GM12878 (cell line): ENCODE measurements at regions of chr15 and their contacts with region 1.

Region 1: DNA sequence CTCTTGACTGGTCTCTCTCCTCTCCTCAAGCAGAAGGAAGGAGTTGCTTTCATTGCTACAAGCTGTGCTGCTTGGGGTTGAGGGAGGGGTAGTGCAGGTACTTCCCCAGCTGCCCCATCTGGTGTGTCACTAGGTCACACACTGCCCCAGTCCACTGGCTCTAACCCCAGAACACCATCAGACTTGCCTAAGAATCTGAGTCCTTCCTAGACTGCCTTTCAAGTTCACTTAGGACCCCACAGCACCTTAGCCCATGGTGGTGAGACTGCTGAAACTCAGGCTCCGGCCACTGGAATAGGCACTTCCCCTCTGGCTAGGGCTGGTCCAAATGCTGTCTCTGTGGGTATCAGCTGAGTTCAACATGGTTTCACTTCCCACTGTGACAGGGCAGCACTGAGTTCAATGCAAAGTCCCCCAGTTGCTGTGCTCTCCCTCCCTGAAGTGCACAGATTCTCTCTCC is 279.7 kb upstream of the GOLGA6L4 start:
- DNase-seq: peak; percentile 87
- ATAC-seq: peak; percentile 99
- H3K4me3 ChIP-seq: no peak overlapping the region
- H3K27ac ChIP-seq: peak overlapping the region; percentile 80
- H3K4me1 ChIP-seq: peaks cover 22% of the 10 kb centered on the region
- H3K27me3 ChIP-seq: no peaks in the 10 kb centered on the region
- CTCF ChIP-seq: no peak
- EP300 ChIP-seq: peak in 1 of 2 experiments; percentile 53; a peak in 1 of 4 replicates
- POLR2A ChIP-seq: peak; percentile 57
- RAD21 ChIP-seq: no peak; the same call in 1 of the 2 replicates

Region 2: DNA sequence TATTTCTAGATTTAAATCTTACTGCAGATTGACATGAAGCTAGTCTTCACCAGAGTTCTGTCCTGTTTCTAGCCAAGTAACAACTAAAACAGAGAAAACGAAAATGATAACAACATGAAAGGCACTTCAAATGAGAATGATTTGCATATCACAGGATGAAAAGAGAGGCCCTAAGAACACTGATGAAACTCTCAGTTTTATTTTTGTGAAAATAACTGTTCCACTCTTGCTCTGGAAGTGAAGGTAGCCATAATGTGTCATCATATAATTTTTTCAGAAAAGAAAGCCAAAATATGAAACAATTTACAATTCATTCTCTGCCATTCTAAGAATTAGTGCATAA is 27.5 kb before region 1 on chr15:
- CTCF ChIA-PET with region 1: interaction called, 3 read pairs
- POLR2A ChIA-PET with region 1: interaction called, 3 read pairs
- RAD21 ChIA-PET with region 1: interaction called, 6 read pairs
- SMC1A ChIA-PET with region 1: interaction called, 10 read pairs
- in situ Hi-C with region 1: no loop called
- intact Hi-C with region 1: no loop called
- DNase-seq: peak; percentile 84
- ATAC-seq: peak; percentile 90
- H3K4me3 ChIP-seq: peak overlapping the region; percentile 31; the same call in 1 of the 2 replicates
- H3K27ac ChIP-seq: peak overlapping the region; percentile 99
- H3K4me1 ChIP-seq: peaks cover 36% of the 10 kb centered on the region
- H3K27me3 ChIP-seq: no peaks in the 10 kb centered on the region
- CTCF ChIP-seq: no peak
- EP300 ChIP-seq: peak; percentile 14 to 63; a peak in 2 of 4 replicates
- POLR2A ChIP-seq: no peak
- RAD21 ChIP-seq: no peak

Region 3: DNA sequence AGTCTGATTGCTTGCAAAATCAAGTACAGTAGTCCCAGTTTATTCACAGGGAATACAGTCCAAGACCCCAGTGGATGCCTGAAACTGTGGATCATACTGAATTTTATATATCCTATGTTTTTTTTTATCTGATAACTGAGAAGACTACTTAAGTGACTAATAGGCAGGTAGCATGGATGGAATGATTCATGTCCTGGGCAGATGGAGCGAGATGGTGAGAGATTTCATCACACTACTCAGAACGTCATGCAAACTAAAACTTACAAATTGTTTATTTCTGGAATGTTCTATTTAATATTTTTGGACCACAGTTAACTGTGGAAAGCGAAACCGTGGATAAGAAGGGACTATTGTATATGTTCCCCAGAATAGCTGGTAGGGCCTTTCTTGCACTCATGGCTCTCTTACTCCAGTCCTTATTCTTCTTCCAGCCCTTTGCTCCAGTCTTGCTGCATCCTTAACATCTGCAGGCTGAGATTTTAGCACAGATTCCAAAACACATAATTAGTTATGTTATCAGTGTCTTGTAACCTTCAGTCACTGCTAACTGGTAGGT is 11.9 kb before region 1 on chr15:
- CTCF ChIA-PET with region 1: interaction called, 4 read pairs
- POLR2A ChIA-PET with region 1: no interaction called
- RAD21 ChIA-PET with region 1: interaction called, 3 read pairs
- SMC1A ChIA-PET with region 1: interaction called, 12 read pairs
- in situ Hi-C with region 1: no loop called
- intact Hi-C with region 1: no loop called
- DNase-seq: no peak
- ATAC-seq: no peak
- H3K4me3 ChIP-seq: no peak overlapping the region
- H3K27ac ChIP-seq: no peak overlapping the region
- H3K4me1 ChIP-seq: peaks cover 5% of the 10 kb centered on the region
- H3K27me3 ChIP-seq: no peaks in the 10 kb centered on the region
- CTCF ChIP-seq: no peak
- EP300 ChIP-seq: no peak
- POLR2A ChIP-seq: no peak
- RAD21 ChIP-seq: no peak

Region 4: DNA sequence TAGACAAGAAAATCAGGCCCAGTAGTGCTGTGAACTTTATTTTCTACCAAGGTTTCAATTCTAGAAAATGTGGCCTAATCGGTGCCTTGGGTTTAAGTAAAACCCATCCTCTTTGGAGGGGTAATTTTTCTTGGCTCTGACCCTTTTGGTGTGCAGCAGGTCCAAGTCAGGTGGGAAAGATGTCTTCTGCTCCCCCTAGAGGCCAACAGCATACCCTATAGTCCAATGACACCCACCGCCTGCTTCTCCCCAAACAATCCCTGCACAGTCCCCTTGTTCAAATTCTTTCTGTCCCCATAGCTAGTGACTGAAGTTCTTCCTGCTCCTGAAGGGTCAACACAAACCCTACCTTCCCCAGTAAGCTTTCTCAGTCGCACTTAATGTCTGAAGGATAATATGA is 18.0 kb after region 1 on chr15:
- CTCF ChIA-PET with region 1: interaction called, 15 read pairs
- POLR2A ChIA-PET with region 1: no interaction called
- RAD21 ChIA-PET with region 1: interaction called, 5 read pairs
- SMC1A ChIA-PET with region 1: interaction called, 5 read pairs
- in situ Hi-C with region 1: no loop called
- intact Hi-C with region 1: no loop called
- DNase-seq: no peak
- ATAC-seq: peak; percentile 93
- H3K4me3 ChIP-seq: no peak overlapping the region
- H3K27ac ChIP-seq: no peak overlapping the region
- H3K4me1 ChIP-seq: no peaks in the 10 kb centered on the region
- H3K27me3 ChIP-seq: no peaks in the 10 kb centered on the region
- CTCF ChIP-seq: peak; percentile 58 to 64 (median 61)
- EP300 ChIP-seq: no peak
- POLR2A ChIP-seq: no peak
- RAD21 ChIP-seq: peak; percentile 60

Region 5: DNA sequence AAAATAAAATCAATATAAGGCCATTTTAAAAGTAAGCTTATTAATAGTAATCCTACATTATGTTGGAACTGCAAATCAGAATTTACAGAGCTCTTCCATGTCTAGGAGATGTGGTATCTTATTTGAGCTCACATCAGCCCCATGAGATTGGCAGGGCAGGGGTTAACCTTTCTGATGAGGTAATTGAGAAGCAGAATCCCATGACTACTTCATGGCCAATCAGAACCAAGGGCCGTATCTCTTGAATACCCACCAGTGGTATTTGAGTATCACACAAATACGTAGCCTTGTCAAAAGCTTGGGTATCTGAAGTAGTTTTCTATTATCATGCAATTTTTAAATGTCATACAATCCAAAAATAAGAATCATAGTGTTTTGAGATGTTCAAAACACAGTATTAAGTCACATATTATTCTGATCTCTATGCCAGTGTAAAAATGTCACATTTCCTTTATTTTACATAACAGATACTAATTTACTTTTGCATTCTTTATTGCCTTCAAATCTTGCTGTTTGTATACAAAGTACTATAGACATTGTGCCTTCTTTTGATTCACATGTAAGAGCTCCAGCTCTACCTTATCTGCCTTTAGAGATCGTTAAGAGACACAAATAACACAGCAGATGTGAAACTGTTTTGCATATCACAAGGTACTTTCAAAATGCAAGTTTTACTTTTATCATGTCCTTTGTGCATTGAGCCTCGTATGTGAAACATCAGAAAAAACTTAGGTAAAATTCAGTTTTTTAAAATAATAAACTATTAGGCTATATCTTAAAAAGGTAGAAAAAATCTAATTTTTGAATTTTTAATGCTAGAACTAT is 28.0 kb after region 1 on chr15:
- CTCF ChIA-PET with region 1: interaction called, 4 read pairs
- POLR2A ChIA-PET with region 1: interaction called, 6 read pairs
- RAD21 ChIA-PET with region 1: interaction called, 9 read pairs
- SMC1A ChIA-PET with region 1: interaction called, 21 read pairs
- in situ Hi-C with region 1: no loop called
- intact Hi-C with region 1: no loop called
- DNase-seq: no peak
- ATAC-seq: peak; percentile 91
- H3K4me3 ChIP-seq: peak overlapping the region; percentile 32
- H3K27ac ChIP-seq: peak overlapping the region; percentile 86
- H3K4me1 ChIP-seq: peaks cover 32% of the 10 kb centered on the region
- H3K27me3 ChIP-seq: no peaks in the 10 kb centered on the region
- CTCF ChIP-seq: no peak
- EP300 ChIP-seq: no peak
- POLR2A ChIP-seq: no peak
- RAD21 ChIP-seq: no peak